Right ventricle myocardium inferior (tissue), 1 donor: ENCODE measurements at regions of chr22 and their contacts with region 1.

Region 1: GRCh38 chr22:30386960-30387827 is at the start of gene RNF215:
- DNase-seq: peak; percentile 92
- ATAC-seq: peak; percentile 95
- total RNA-seq, gene RNF215: 3.7 TPM

Region 2: DNA sequence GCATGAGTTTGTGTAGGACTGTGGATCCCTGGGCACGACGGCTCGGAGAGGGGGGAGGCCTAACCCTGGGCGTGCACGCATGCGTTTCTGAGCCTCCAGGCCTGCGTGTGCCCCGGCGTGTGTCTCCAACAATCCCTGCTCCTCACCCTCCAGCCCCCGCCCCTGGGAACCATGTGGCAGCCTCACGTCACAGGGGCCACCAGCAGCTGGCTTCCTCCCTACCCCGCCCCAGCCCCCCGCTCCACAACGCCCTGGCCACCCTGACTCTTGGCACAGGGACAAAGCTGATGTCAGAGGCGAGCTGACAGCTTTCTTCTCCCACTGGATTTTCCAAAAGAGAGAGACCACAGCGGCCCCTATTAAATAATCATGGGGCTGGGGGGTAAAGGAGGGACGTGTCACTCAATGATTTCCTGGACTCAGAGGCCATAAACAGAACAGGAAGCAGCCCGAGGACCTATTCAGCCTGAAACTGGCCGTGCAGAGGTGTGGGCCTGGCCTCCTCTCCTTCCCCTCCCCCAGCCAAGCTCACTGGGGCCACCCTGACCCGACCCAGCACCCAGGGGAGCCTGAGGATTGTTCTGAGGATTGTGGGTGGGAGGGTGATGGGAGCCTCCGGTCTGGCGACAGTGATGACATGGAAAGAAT is 133.9 kb before region 1 on chr22:
- intact Hi-C with region 1: loop called (anchors 1 kb)
- DNase-seq: peak; percentile 85
- ATAC-seq: peak; percentile 58

Region 3: DNA sequence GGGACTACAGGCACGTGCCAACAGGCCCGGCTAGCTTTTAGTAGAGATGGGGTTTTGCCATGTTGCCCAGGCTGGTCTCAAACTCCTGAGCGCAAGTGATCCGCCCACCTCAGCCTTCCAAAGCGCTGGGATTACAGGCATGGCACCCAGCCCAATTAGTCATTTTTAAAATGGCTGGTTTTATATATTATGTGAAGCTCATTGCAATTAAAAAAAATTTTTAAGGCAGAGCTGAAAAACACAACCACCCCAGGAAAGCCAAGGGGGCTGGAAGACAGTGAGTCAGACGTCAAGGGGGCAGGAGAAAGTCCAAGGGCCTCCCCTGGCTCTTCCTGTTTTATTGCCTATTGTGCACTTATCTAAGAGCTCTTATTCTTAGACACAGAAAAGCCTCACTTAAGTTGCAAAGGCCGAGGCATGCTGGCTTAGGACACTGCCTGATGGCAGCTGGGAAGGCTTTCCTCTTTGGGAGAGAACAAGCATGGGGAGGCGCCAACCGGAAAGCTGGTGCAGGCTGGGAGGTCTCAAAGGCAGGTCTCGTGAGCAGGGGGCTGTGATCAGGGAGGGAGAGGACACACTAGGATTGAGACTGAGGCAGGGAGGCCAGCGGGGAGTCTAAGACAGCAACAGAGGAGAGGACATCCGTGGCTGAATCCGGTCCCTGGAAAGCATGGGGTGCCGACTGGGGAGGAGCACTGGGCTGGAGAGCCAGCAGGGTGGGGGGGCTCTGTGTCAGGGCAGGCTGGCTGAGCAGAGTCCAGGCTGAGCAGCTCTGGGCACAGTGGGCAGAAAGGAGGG is 109.4 kb before region 1 on chr22:
- intact Hi-C with region 1: loop called (anchors 5 kb)
- DNase-seq: peak; percentile 67
- ATAC-seq: peak; percentile 55

Region 4: DNA sequence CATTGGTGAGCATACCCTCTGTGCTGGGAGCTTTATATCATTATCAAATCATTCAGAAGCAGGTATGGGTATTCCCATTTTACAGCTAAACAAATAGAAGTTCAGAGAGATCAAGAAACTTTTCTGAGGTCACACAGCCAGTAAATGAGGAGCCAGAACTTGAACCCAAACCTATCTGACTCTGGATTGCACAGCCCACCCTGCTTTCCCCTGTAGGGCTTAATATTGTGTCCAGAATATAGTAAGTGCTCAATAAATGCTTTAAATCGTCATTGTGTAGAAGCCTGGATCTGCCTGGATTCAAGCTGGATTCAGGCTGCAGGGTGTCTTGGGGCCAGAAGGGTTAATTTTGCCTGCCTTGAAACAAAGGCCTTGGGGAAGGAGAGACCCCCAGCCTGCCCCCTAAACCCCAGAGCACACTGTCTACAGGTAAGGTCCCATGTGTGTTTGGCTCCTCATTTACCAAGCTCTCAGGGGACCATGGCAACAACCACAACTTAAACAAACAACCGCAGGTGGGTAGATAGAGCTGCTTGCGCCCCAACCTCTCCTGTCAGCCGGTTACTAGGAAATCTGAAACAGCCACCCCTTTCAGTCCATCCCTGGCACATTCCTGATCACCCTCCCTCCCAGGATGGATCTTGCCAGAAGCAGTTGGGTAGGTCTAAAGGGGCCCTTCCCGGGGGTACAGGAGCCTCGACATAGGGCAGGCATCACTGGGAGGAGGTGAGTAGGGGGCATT is 87.7 kb after region 1 on chr22:
- intact Hi-C with region 1: no loop called
- DNase-seq: no peak
- ATAC-seq: no peak

Region 5: GRCh38 chr22:30485362-30485988 is 98.3 kb after region 1 on chr22:
- intact Hi-C with region 1: loop called (anchors 1 kb)
- DNase-seq: peak; percentile 80
- ATAC-seq: peak; percentile 84